ENCODE measurements at regions of chr2 and their contacts with region 1.

Region 1: GRCh38 chr2:11681722-11682589 is 12.0 kb upstream of the NTSR2 start:
- DNase-seq: peak in 1 of 2 experiments; percentile 94
- H3K4me3 ChIP-seq: no peak overlapping the region; a peak in 2 of 8 replicates
- H3K27ac ChIP-seq: no peak overlapping the region
- H3K4me1 ChIP-seq: peaks cover 3 to 13% (median 10%) of the 10 kb centered on the region in 4 experiments; a peak in 6 of 7 replicates
- H3K27me3 ChIP-seq: no peaks in the 10 kb centered on the region
- CTCF ChIP-seq: peak; percentile 86 to 96 (median 95)
- EP300 ChIP-seq: no peak
- POLR2A ChIP-seq: no peak
- RAD21 ChIP-seq: peak; percentile 77 to 88

Region 2: GRCh38 chr2:11631462-11631861 is 50.5 kb before region 1 on chr2:
- CTCF ChIA-PET with region 1: interaction called, 15 read pairs
- POLR2A ChIA-PET with region 1: no interaction called
- DNase-seq: no peak
- H3K4me3 ChIP-seq: no peak overlapping the region
- H3K27ac ChIP-seq: no peak overlapping the region
- H3K4me1 ChIP-seq: no peaks in the 10 kb centered on the region
- H3K27me3 ChIP-seq: no peaks in the 10 kb centered on the region
- CTCF ChIP-seq: no peak
- EP300 ChIP-seq: no peak
- POLR2A ChIP-seq: no peak
- RAD21 ChIP-seq: no peak

Region 3: GRCh38 chr2:11647834-11648600 is 33.9 kb before region 1 on chr2:
- CTCF ChIA-PET with region 1: interaction called, 29 read pairs
- POLR2A ChIA-PET with region 1: no interaction called
- DNase-seq: no peak
- H3K4me3 ChIP-seq: no peak overlapping the region
- H3K27ac ChIP-seq: no peak overlapping the region
- H3K4me1 ChIP-seq: no peaks in the 10 kb centered on the region
- H3K27me3 ChIP-seq: no peaks in the 10 kb centered on the region
- CTCF ChIP-seq: peak; percentile 38 to 55 (median 39)
- EP300 ChIP-seq: no peak
- POLR2A ChIP-seq: no peak
- RAD21 ChIP-seq: peak; percentile 60 to 69

Region 4: GRCh38 chr2:11663427-11663826 is 18.5 kb before region 1 on chr2:
- CTCF ChIA-PET with region 1: interaction called, 76 read pairs
- POLR2A ChIA-PET with region 1: no interaction called
- DNase-seq: no peak
- H3K4me3 ChIP-seq: no peak overlapping the region
- H3K27ac ChIP-seq: no peak overlapping the region
- H3K4me1 ChIP-seq: no peaks in the 10 kb centered on the region
- H3K27me3 ChIP-seq: peaks cover 0 to 4% (median 2%) of the 10 kb centered on the region in 4 experiments; a peak in 6 of 7 replicates
- CTCF ChIP-seq: no peak
- EP300 ChIP-seq: no peak
- POLR2A ChIP-seq: no peak
- RAD21 ChIP-seq: no peak

Region 5: GRCh38 chr2:11778923-11779757 is 97.2 kb after region 1 on chr2:
- CTCF ChIA-PET with region 1: interaction called, 81 read pairs
- POLR2A ChIA-PET with region 1: no interaction called
- DNase-seq: peak; percentile 19 to 95
- H3K4me3 ChIP-seq: no peak overlapping the region
- H3K27ac ChIP-seq: no peak overlapping the region
- H3K4me1 ChIP-seq: peaks cover 0 to 3% (median 1%) of the 10 kb centered on the region in 4 experiments; a peak in 3 of 7 replicates
- H3K27me3 ChIP-seq: no peaks in the 10 kb centered on the region; a peak in 1 of 7 replicates
- CTCF ChIP-seq: peak; percentile 81 to 95 (median 89)
- EP300 ChIP-seq: no peak
- POLR2A ChIP-seq: no peak
- RAD21 ChIP-seq: peak; percentile 92 to 93

Measured in H1 (cell line).